A673 (cell line): ENCODE measurements at regions of chr6 and their contacts with region 1.

Region 1: GRCh38 chr6:112180095-112180820 is 74.1 kb downstream of the LAMA4 start:
- DNase-seq: peak; percentile 89
- H3K4me3 ChIP-seq: no peak overlapping the region
- H3K27ac ChIP-seq: no peak overlapping the region
- H3K4me1 ChIP-seq: no peaks in the 10 kb centered on the region
- H3K27me3 ChIP-seq: peaks cover 4% of the 10 kb centered on the region
- CTCF ChIP-seq: peak; percentile 80

Region 2: GRCh38 chr6:112203577-112204349 is 23.5 kb after region 1 on chr6:
- CTCF ChIA-PET with region 1: no interaction called
- POLR2A ChIA-PET with region 1: no interaction called
- intact Hi-C with region 1: no loop called
- DNase-seq: no peak
- H3K4me3 ChIP-seq: no peak overlapping the region
- H3K27ac ChIP-seq: no peak overlapping the region
- H3K4me1 ChIP-seq: peaks cover 15% of the 10 kb centered on the region
- H3K27me3 ChIP-seq: no peaks in the 10 kb centered on the region
- CTCF ChIP-seq: no peak

Region 3: GRCh38 chr6:112269114-112269513 is 88.9 kb after region 1 on chr6:
- CTCF ChIA-PET with region 1: interaction called, 7 read pairs
- POLR2A ChIA-PET with region 1: no interaction called
- intact Hi-C with region 1: loop called (anchors 5 kb)
- DNase-seq: peak; percentile 49
- H3K4me3 ChIP-seq: no peak overlapping the region
- H3K27ac ChIP-seq: no peak overlapping the region
- H3K4me1 ChIP-seq: no peaks in the 10 kb centered on the region
- H3K27me3 ChIP-seq: no peaks in the 10 kb centered on the region
- CTCF ChIP-seq: peak; percentile 57

Region 4: GRCh38 chr6:112311950-112312547 is 131.8 kb after region 1 on chr6:
- CTCF ChIA-PET with region 1: interaction called, 12 read pairs
- POLR2A ChIA-PET with region 1: no interaction called
- intact Hi-C with region 1: loop called (anchors 1 kb)
- DNase-seq: peak; percentile 52
- H3K4me3 ChIP-seq: no peak overlapping the region
- H3K27ac ChIP-seq: no peak overlapping the region
- H3K4me1 ChIP-seq: no peaks in the 10 kb centered on the region
- H3K27me3 ChIP-seq: peaks cover 21% of the 10 kb centered on the region
- CTCF ChIP-seq: peak; percentile 75

Region 5: DNA sequence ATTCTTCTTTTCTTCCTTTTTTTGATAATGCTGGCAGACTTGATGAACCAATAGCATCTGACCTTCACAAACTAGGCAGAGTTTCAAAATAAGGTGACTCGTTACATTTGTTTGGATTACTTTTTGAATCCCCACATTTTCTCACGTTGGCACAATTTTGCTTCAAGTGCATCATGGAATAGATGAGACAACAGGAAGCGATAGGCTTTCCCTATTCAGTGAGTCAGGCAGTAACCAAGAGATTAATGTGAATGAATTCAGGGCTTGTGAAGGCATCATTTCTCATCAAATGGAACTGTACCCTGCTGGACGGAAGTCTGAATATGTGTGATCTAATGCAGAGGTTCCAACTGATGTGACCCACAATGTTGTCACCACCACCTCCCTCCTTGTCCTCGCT is 177.5 kb after region 1 on chr6:
- CTCF ChIA-PET with region 1: interaction called, 17 read pairs
- POLR2A ChIA-PET with region 1: no interaction called
- intact Hi-C with region 1: no loop called
- DNase-seq: peak; percentile 19
- H3K4me3 ChIP-seq: no peak overlapping the region
- H3K27ac ChIP-seq: no peak overlapping the region
- H3K4me1 ChIP-seq: peaks cover 8% of the 10 kb centered on the region
- H3K27me3 ChIP-seq: no peaks in the 10 kb centered on the region
- CTCF ChIP-seq: no peak

Region 6: GRCh38 chr6:112372226-112372806 is 192.1 kb after region 1 on chr6:
- CTCF ChIA-PET with region 1: interaction called, 7 read pairs
- POLR2A ChIA-PET with region 1: no interaction called
- intact Hi-C with region 1: loop called (anchors 2 kb)
- DNase-seq: peak; percentile 53
- H3K4me3 ChIP-seq: no peak overlapping the region
- H3K27ac ChIP-seq: no peak overlapping the region
- H3K4me1 ChIP-seq: no peaks in the 10 kb centered on the region
- H3K27me3 ChIP-seq: peaks cover 12% of the 10 kb centered on the region
- CTCF ChIP-seq: peak; percentile 67